ENCODE measurements at regions of chr22 and their contacts with region 1.

Region 1: DNA sequence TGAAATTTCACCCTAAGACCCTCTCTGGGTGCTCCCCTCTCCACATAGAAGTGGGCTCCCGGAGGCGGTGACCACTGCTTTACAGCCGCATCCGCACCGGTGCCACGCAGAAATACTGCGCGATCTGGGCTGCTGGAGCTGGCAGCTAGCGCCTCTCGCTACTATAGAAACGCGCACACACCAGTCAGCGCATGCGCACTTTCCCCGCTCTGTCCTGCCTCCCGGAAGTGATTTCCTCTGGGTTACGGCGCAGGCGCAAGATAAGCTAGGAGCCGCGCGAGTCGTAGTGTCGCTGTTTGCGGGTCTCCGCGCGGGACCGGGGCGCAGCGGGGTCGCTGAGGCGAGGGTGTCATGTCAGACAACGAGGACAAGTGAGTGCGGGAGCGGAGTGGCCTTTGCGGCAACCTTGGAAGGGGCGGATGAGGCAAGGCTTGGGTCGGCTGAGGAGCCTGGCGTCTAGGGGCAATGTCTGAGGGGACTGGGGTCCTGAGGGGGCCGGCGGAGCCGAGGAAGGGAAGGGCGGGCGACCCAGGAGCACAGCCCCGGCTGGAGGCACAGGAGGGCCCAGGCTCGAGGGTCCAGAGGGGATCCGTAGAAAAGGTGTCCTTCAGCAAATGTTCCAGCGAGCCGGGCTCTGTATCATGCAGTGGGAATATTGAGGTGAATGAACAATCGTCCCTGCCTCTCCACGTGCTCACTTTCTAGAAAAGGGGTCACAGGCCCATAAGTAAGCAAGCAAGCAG is at the starts of genes C22orf23 and POLR2F:
- DNase-seq: peak; percentile 98 to 99
- ATAC-seq: peak; percentile 96
- H3K4me3 ChIP-seq: peak within 1 kb of the TSS; percentile 76 to 81
- H3K27ac ChIP-seq: no peak within 1 kb of the TSS
- H3K4me1 ChIP-seq: peaks cover 0 to 2% of the 10 kb centered on the region in 2 donors
- H3K27me3 ChIP-seq: no peaks in the 10 kb centered on the region
- total RNA-seq, gene C22orf23: not detected
- total RNA-seq, gene POLR2F: 45.9 to 46.2 TPM

Region 2: DNA sequence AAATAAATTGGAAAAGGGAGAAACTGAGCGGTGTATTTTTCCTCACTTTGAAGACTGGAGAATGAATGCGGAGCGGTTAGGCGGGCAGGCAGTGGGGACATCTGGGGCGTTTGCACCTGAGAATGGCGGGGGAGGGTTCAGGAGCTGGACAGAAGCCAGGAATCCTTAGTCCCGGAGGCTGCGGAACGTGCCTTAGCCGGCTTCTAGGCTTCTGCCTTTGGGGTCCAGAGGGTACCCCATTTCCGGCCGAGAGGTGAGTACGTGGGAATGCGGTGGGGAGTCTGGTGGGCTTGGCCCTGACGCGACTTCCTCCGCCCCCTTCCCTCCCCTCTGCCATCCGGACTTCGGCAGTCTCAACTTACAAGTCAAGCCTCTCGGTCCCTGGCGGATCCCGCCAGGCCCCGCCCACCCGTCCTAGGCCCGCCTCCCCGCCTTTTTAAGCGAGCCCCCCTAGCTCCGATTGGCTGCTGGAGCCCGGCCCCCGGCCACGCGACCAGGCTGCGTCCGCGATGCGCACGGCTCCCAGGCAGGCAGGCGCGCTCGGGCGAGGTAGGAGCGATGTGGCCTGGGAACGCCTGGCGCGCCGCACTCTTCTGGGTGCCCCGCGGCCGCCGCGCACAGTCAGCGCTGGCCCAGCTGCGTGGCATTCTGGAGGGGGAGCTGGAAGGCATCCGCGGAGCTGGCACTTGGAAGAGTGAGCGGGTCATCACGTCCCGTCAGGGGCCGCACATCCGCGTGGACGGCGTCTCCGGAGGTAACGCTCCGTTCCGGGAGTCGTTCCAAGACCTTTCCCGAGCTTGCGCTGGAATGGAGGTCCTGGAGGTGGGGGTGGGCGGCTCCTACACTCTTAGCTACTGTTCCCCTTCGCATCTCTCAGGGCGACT is 146.0 kb before region 1 on chr22 and contains the start of gene GCAT:
- intact Hi-C with region 1: loop called in 1 of 2 experiments (anchors 5 kb)
- DNase-seq: peak; percentile 97 to 98
- ATAC-seq: peak; percentile 94
- H3K4me3 ChIP-seq: peak within 1 kb of the TSS; percentile 32 to 42
- H3K27ac ChIP-seq: peak within 1 kb of the TSS; percentile 1 to 2
- H3K4me1 ChIP-seq: peaks cover 0 to 4% of the 10 kb centered on the region in 2 donors
- H3K27me3 ChIP-seq: no peaks in the 10 kb centered on the region
- total RNA-seq, gene GCAT: 4.4 to 5.8 TPM